Psoas muscle (tissue), 8 donors: ENCODE measurements at regions of chr22 and their contacts with region 1.

Region 1: GRCh38 chr22:31768422-31769059 is 14.7 kb downstream of the DEPDC5 start:
- DNase-seq: no peak
- ATAC-seq: no peak
- H3K4me3 ChIP-seq: no peak overlapping the region
- H3K27ac ChIP-seq: no peak overlapping the region
- H3K4me1 ChIP-seq: no peaks in the 10 kb centered on the region
- H3K27me3 ChIP-seq: no peaks in the 10 kb centered on the region
- CTCF ChIP-seq: no peak

Region 2: DNA sequence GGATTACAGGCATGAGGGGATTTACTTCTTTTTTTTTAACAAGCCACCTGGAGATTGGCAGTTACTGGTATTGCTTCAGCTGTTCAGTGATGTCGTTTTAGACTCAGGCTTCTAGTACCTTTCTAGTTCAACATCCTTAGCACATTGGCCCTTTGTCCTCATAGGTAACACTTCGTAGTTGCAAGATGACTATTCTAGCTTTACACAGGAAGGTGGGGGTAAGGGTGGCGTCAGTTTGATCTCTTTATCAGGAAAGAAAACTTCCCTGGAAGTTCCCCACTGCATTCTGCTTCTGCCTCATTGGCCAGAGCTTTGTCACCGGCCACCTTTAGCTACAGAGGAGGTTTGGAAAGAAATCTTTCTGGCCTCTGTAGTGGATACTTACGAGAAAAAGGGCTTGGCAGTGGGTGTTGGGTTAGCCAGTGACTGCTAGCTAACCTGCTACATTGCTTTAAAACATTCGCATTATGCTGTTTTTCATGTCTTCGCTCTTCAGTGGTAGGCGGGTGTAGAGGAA is 231.5 kb before region 1 on chr22:
- intact Hi-C with region 1: no loop called
- DNase-seq: no peak
- ATAC-seq: no peak
- H3K4me3 ChIP-seq: no peak overlapping the region
- H3K27ac ChIP-seq: no peak overlapping the region
- H3K4me1 ChIP-seq: no peaks in the 10 kb centered on the region
- H3K27me3 ChIP-seq: no peaks in the 10 kb centered on the region
- CTCF ChIP-seq: no peak

Region 3: GRCh38 chr22:31818481-31819392 is 50.2 kb after region 1 on chr22:
- intact Hi-C with region 1: loop called in 1 of 2 experiments (anchors 5 kb)
- DNase-seq: no peak
- ATAC-seq: no peak
- H3K4me3 ChIP-seq: no peak overlapping the region
- H3K27ac ChIP-seq: no peak overlapping the region
- H3K4me1 ChIP-seq: no peaks in the 10 kb centered on the region
- H3K27me3 ChIP-seq: no peaks in the 10 kb centered on the region
- CTCF ChIP-seq: no peak